ENCODE measurements at regions of chr11 and their contacts with region 1.

Region 1: GRCh38 chr11:46616998-46617675 is at the starts of genes ATG13 and HARBI1:
- DNase-seq: peak; percentile 72 to 94
- H3K4me3 ChIP-seq: peak within 1 kb of the TSS; percentile 95
- H3K27ac ChIP-seq: peak within 1 kb of the TSS; percentile 95
- H3K4me1 ChIP-seq: peaks cover 24% of the 10 kb centered on the region
- H3K27me3 ChIP-seq: no peaks in the 10 kb centered on the region
- CTCF ChIP-seq: no peak
- total RNA-seq, gene ATG13: 109 TPM in 2 replicates
- total RNA-seq, gene HARBI1: 6.6 and 8.0 TPM in 2 replicates

Region 2: DNA sequence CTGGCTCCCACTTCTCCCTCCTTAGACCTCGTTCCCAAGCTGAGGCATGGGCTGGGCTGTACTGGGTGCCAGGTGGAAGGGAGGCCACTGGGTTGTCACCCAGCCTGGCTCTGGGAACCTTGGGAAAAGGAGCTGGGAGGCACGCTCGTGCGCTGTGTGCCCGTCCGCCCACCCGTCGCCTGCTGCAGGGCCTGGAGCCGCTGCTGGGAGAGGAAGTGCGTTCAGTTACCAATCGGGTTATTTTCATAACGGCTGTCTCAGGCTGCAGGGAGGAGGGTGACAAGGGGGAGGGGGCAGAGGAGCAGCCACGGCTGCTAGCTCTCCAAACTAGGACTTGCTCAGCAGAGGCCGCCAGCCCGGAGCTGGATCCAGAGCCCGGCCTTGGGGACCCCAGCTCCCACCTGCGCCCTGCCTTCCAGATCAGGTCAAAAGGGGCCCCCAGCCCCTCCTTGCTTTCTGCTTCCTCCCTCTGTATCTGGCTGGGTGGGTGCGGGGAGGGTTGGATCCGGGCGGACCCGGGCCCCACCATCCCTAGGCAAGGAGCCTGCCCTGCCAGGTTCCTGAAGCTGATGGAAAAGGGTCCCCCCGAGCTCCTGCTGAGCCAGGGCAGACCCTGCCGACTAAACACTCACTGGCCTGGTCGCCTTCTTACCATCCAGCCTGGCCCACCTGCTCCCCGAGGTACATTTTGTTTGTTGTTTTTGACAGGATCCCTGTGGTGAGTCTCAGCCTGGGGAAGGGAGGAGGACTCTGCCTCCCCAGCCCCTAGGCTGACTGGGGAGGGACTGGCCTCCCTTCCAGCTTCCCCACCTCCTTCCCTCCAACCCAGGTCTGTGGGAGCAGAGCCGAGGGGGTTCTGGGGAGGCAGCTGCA is 255.6 kb before region 1 on chr11:
- CTCF ChIA-PET with region 1: no interaction called
- POLR2A ChIA-PET with region 1: no interaction called
- intact Hi-C with region 1: loop called (anchors 5 kb)
- DNase-seq: no peak
- H3K4me3 ChIP-seq: no peak overlapping the region
- H3K27ac ChIP-seq: no peak overlapping the region
- H3K4me1 ChIP-seq: peaks cover 22% of the 10 kb centered on the region
- H3K27me3 ChIP-seq: no peaks in the 10 kb centered on the region
- CTCF ChIP-seq: no peak

Region 3: DNA sequence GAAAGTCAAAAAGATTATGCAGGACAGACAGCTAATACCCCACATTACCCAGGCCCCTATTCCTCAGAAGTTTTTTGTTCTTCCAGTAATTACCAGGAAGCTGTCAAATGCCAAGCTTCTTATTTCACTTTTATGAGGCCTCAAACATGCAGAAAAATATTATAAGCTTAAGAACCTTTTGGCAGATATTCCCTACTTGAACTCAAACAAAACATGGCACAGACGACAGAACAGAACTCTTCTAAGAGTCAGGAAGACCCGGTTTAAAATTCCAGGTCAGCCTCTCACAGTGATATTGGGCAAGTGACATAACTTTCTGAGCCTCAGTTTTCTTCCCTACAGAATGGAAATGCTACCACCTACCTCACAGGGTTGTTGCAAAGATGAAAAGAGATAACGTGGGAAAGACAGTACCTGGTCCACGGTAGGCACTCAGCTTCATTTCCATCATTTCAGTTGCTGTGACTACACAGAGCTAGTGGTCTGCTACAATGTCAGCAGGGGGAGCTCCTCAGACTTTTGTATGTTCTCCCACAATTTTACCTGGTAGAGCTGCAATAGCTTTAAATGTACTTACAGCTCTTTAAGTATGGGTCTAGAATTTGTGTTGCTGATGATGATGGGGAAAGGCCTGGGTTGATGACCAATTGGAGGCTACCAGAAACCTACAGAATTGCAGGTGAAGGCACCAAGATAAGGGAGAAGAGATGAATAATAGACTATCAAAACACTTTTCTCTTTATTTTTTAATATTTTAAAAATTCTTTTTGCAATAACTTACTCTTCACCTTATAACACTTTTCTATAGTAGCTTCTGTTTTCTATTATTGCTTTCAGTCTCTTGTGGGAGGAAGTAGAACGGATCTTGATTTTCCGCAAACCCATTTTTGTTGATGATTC is 127.2 kb before region 1 on chr11:
- CTCF ChIA-PET with region 1: no interaction called
- POLR2A ChIA-PET with region 1: no interaction called
- intact Hi-C with region 1: loop called (anchors 5 kb)
- DNase-seq: peak in 1 of 2 experiments; percentile 23
- H3K4me3 ChIP-seq: no peak overlapping the region
- H3K27ac ChIP-seq: no peak overlapping the region
- H3K4me1 ChIP-seq: no peaks in the 10 kb centered on the region
- H3K27me3 ChIP-seq: no peaks in the 10 kb centered on the region
- CTCF ChIP-seq: peak; percentile 71

Region 4: GRCh38 chr11:46554205-46555055 is 62.7 kb before region 1 on chr11:
- CTCF ChIA-PET with region 1: interaction called, 12 read pairs
- POLR2A ChIA-PET with region 1: interaction called, 5 read pairs
- intact Hi-C with region 1: loop called (anchors 2 kb)
- DNase-seq: peak; percentile 17 to 97
- H3K4me3 ChIP-seq: peak overlapping the region; percentile 43; the same call in 1 of the 2 replicates
- H3K27ac ChIP-seq: peak overlapping the region; percentile 95
- H3K4me1 ChIP-seq: peaks cover 65% of the 10 kb centered on the region
- H3K27me3 ChIP-seq: no peaks in the 10 kb centered on the region
- CTCF ChIP-seq: no peak

Region 5: GRCh38 chr11:46700241-46701077 is 83.3 kb after region 1 on chr11 and contains the starts of genes ARHGAP1 and ZNF408:
- CTCF ChIA-PET with region 1: no interaction called
- POLR2A ChIA-PET with region 1: no interaction called
- intact Hi-C with region 1: loop called (anchors 1 kb)
- DNase-seq: peak; percentile 96 to 99
- H3K4me3 ChIP-seq: peak within 1 kb of the TSS; percentile 61
- H3K27ac ChIP-seq: peak within 1 kb of the TSS; percentile 64
- H3K4me1 ChIP-seq: peaks cover 13% of the 10 kb centered on the region
- H3K27me3 ChIP-seq: no peaks in the 10 kb centered on the region
- CTCF ChIP-seq: no peak
- total RNA-seq, gene ARHGAP1: 60.3 and 64.2 TPM in 2 replicates
- total RNA-seq, gene ZNF408: 13.8 and 16.2 TPM in 2 replicates

Measured in PC-9 (cell line).